ENCODE measurements at regions of chr12 and their contacts with region 1.

Region 1: DNA sequence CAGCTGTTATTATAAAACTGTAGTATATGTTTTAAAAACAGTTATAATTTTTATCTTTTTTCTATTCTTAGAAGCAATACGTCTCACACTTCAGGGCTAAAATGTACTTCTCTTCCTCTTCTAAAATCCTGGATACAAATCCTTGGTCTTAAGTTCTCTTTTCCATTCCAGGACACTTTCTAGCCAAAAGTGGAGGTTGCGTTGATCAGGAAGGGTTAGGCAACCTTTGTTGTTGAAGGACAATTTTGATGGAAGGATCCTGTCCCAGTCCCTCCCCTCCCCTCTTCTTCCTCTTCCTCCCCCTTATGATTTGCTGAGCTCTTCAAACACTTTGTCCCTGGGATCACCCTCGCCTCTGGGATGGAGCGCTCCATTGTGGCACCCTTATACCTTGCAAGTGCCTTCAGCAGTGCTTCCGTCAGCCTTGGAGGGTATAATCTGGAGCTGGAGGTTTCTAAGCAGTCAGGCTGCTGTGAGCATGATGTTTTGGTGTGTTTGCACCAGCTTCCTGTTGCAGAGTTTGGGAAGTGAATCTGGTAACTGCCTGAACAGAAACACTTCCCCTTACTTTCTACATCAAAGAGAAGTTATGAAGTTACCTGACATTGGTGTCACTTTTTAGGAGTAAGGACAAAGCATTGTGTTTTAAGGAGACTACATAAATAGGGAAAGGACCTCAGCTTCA is 87.4 kb upstream of the SLC38A2 start:
- DNase-seq: peak; percentile 38
- ATAC-seq: peak; percentile 41
- H3K4me3 Mint-ChIP-seq: peak overlapping the region; percentile 87
- H3K27ac Mint-ChIP-seq: peak overlapping the region; percentile 95
- H3K4me1 Mint-ChIP-seq: peaks cover 52% of the 10 kb centered on the region
- H3K27me3 Mint-ChIP-seq: no peaks in the 10 kb centered on the region

Region 2: DNA sequence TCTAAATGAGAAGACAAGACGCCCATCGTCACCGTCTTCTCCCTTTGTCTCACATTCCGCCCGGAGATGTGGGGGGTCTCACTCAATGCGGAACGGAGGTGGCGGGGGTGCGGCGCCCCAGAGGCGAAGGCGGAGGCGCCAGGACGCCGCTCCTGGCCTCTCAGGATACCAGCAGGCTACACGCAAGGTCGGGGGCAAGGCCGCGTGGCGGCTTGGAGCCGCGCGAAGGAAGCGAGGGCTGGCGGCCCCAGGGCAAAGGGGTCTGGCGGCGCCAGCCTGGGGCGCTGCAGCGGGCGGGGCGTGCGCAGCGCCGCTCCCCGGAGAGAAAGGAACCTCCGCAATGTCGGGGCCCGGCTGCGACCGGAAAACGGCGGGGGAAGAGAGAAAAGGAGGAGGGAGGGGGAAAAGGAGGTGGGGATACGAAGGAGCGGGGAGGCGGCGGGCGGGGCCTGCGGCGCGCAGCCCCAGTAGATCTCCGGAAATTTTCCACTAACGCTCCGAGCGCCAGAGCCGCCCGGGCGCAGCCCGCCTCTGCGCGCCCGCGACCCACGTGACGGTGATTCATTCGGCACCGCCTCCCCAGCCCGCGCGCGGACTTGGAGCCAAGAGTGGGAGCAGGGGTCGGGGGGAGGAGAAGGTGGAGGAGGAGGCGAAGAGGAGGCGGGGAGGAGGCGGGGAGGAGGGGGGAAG is 76.9 kb before region 1 on chr12:
- POLR2A ChIA-PET with region 1: interaction called, 16 read pairs
- DNase-seq: peak; percentile 95
- ATAC-seq: peak; percentile 87
- H3K4me3 Mint-ChIP-seq: peak overlapping the region; percentile 93
- H3K27ac Mint-ChIP-seq: peak overlapping the region; percentile 92
- H3K4me1 Mint-ChIP-seq: peaks cover 40% of the 10 kb centered on the region
- H3K27me3 Mint-ChIP-seq: peaks cover 3% of the 10 kb centered on the region

Region 3: GRCh38 chr12:46442239-46442638 is 17.8 kb before region 1 on chr12:
- POLR2A ChIA-PET with region 1: no interaction called
- DNase-seq: no peak
- ATAC-seq: no peak
- H3K4me3 Mint-ChIP-seq: no peak overlapping the region
- H3K27ac Mint-ChIP-seq: no peak overlapping the region
- H3K4me1 Mint-ChIP-seq: peaks cover 6% of the 10 kb centered on the region
- H3K27me3 Mint-ChIP-seq: no peaks in the 10 kb centered on the region

Region 4: GRCh38 chr12:46470036-46470627 is 10.1 kb after region 1 on chr12:
- POLR2A ChIA-PET with region 1: interaction called, 40 read pairs
- DNase-seq: peak; percentile 34
- ATAC-seq: peak; percentile 99
- H3K4me3 Mint-ChIP-seq: peak overlapping the region; percentile 84
- H3K27ac Mint-ChIP-seq: peak overlapping the region; percentile 94
- H3K4me1 Mint-ChIP-seq: peaks cover 32% of the 10 kb centered on the region
- H3K27me3 Mint-ChIP-seq: no peaks in the 10 kb centered on the region

Measured in activated naive CD8-positive, alpha-beta T cell treated with anti-CD3 and anti-CD28 coated beads, Interleukin-2, amount 10 ng/mL, durations not matched to agents 7 days and 5 days (primary cell).